ENCODE measurements at regions of chr9 and their contacts with region 1.

Region 1: GRCh38 chr9:757246-757881 is 84.1 kb upstream of the DMRT1 start:
- DNase-seq: no peak
- H3K4me3 ChIP-seq: no peak overlapping the region
- H3K27ac ChIP-seq: no peak overlapping the region
- H3K4me1 ChIP-seq: no peaks in the 10 kb centered on the region
- H3K27me3 ChIP-seq: no peaks in the 10 kb centered on the region
- CTCF ChIP-seq: peak; percentile 16 to 48 (median 23)
- POLR2A ChIP-seq: no peak

Region 2: DNA sequence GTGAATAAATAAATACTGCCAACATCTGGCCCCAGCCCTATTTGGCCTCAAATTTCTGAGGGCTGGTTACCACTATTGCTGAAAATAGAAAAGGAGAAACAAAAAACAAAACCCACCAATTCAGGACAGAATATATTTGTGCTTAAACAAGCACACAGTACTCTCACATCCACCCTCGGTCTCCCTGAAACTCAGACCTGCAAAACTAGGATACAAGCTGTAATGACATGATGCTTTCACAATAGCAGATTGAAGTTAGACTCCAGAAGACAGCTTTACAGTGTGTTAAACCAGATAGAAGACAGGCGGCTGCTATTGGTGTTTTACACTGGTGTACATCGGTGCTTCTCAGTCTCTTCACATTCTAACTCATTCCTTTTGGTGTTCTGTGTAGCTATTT is 130.8 kb before region 1 on chr9:
- intact Hi-C with region 1: no loop called
- DNase-seq: no peak
- H3K4me3 ChIP-seq: no peak overlapping the region
- H3K27ac ChIP-seq: peak overlapping the region in 1 of 2 donors; percentile 43
- H3K4me1 ChIP-seq: peaks cover 0 to 4% of the 10 kb centered on the region in 2 donors
- H3K27me3 ChIP-seq: no peaks in the 10 kb centered on the region
- CTCF ChIP-seq: no peak
- POLR2A ChIP-seq: no peak

Region 3: GRCh38 chr9:693201-694091 is 63.9 kb before region 1 on chr9:
- intact Hi-C with region 1: loop called (anchors 10 kb)
- DNase-seq: no peak
- H3K4me3 ChIP-seq: peak overlapping the region; percentile 21 to 47 (median 24)
- H3K27ac ChIP-seq: peak overlapping the region; percentile 78 to 92
- H3K4me1 ChIP-seq: peaks cover 14 to 17% of the 10 kb centered on the region in 2 donors
- H3K27me3 ChIP-seq: no peaks in the 10 kb centered on the region
- CTCF ChIP-seq: no peak
- POLR2A ChIP-seq: no peak